Right ventricle myocardium inferior (tissue), 1 donor: ENCODE measurements at regions of chr6 and their contacts with region 1.

Region 1: GRCh38 chr6:29926413-29927274 is 15.7 kb upstream of the HLA-A start:
- DNase-seq: peak; percentile 94
- ATAC-seq: peak; percentile 84

Region 2: GRCh38 chr6:29887819-29888776 is 38.5 kb before region 1 on chr6:
- intact Hi-C with region 1: loop called (anchors 5 kb)
- DNase-seq: peak; percentile 92
- ATAC-seq: peak; percentile 91

Region 3: DNA sequence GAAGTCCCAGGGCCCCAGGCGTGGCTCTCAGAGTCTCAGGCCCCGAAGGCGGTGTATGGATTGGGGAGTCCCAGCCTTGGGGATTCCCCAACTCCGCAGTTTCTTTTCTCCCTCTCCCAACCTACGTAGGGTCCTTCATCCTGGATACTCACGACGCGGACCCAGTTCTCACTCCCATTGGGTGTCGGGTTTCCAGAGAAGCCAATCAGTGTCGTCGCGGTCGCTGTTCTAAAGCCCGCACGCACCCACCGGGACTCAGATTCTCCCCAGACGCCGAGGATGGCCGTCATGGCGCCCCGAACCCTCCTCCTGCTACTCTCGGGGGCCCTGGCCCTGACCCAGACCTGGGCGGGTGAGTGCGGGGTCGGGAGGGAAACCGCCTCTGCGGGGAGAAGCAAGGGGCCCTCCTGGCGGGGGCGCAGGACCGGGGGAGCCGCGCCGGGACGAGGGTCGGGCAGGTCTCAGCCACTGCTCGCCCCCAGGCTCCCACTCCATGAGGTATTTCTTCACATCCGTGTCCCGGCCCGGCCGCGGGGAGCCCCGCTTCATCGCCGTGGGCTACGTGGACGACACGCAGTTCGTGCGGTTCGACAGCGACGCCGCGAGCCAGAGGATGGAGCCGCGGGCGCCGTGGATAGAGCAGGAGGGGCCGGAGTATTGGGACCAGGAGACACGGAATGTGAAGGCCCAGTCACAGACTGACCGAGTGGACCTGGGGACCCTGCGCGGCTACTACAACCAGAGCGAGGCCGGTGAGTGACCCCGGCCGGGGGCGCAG is 15.8 kb after region 1 on chr6 and contains the start of gene HLA-A:
- intact Hi-C with region 1: loop called (anchors 2 kb)
- DNase-seq: peak; percentile 97
- ATAC-seq: peak; percentile 98
- total RNA-seq, gene HLA-A: 249 TPM

Region 4: DNA sequence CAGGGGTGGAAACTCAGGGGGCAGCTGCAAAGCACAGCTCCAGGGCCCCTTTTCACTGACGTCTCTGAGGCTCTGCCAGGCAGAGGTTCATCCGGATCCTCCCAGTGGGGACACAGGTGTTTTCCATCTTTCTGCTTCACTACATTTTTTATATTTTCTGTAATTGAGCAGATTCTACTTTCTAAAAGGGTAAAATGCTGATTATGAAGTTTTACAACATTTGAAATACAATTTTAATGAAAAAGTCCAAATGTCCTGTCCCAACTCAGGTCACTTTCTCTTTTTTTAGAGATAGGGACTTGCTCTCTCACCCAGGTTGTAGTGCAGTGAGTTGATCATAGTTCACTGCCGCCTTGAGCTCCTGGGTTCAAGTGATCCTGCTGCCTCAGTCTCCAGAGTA is 57.6 kb after region 1 on chr6:
- intact Hi-C with region 1: no loop called
- DNase-seq: no peak
- ATAC-seq: no peak

Region 5: GRCh38 chr6:30238174-30238795 is 311.6 kb after region 1 on chr6:
- intact Hi-C with region 1: no loop called
- DNase-seq: no peak
- ATAC-seq: no peak